GM23248 (cell line): ENCODE measurements at regions of chr2 and their contacts with region 1.

Region 1: GRCh38 chr2:111698743-111699554 is 185.0 kb downstream of the ANAPC1 start:
- DNase-seq: peak; percentile 97
- H3K4me3 ChIP-seq: peak overlapping the region; percentile 41
- H3K27ac ChIP-seq: peak overlapping the region; percentile 49
- H3K4me1 ChIP-seq: peaks cover 23% of the 10 kb centered on the region
- H3K27me3 ChIP-seq: no peaks in the 10 kb centered on the region

Region 2: GRCh38 chr2:110717734-110718133 is 981.2 kb before region 1 on chr2:
- in situ Hi-C with region 1: no loop called
- DNase-seq: peak; percentile 23
- H3K4me3 ChIP-seq: no peak overlapping the region
- H3K27ac ChIP-seq: no peak overlapping the region
- H3K4me1 ChIP-seq: peaks cover 15% of the 10 kb centered on the region
- H3K27me3 ChIP-seq: peaks cover 60% of the 10 kb centered on the region

Region 3: GRCh38 chr2:111120253-111121027 is 578.5 kb before region 1 on chr2 and contains the start of gene BCL2L11:
- in situ Hi-C with region 1: loop called (anchors 25 kb)
- DNase-seq: peak; percentile 94
- H3K4me3 ChIP-seq: peak within 1 kb of the TSS; percentile 77
- H3K27ac ChIP-seq: no peak within 1 kb of the TSS
- H3K4me1 ChIP-seq: peaks cover 3% of the 10 kb centered on the region; the same call in 1 of the 2 replicates
- H3K27me3 ChIP-seq: peaks cover 20% of the 10 kb centered on the region
- total RNA-seq, gene BCL2L11: under 0.01 and 0.22 TPM in 2 replicates

Region 4: DNA sequence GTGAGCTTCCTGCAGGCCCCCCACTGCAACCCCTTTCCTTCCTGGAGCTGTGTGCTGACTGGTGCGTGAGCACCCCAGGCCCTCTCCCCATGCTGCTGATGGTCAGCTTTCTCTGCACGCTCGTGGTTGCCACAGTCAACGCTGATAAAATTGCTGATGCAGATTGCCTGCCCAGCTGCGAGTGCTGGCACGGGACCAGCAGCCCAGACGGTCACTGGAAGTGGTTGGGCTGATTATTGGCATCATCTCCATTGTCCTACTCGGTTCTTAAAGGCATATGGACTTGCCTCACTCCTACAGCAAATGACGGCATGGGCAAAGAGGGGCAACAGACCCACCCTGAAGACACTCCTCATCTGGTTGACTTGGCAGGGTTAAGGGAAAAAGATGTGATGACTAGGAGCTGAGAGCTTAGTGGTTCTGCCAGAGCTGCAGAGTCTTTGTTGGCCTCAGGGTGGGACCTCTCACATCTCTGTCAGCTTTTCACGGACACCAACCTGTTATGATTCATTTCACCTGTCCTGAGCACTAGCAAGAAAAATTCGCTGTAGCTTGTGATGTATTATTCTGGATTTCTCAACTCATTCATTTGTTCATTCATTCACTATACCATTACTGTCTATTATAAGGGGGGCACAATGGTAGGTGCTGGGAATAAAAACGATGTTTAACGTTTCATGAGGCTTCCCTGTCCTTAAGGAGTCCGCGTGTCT is 1541.4 kb after region 1 on chr2:
- in situ Hi-C with region 1: no loop called
- DNase-seq: peak; percentile 92
- H3K4me3 ChIP-seq: peak overlapping the region; percentile 56
- H3K27ac ChIP-seq: peak overlapping the region; percentile 94
- H3K4me1 ChIP-seq: peaks cover 42% of the 10 kb centered on the region
- H3K27me3 ChIP-seq: no peaks in the 10 kb centered on the region